ENCODE measurements at regions of chr11 and their contacts with region 1.

Region 1: GRCh38 chr11:1572197-1573076 is at the start of gene DUSP8:
- DNase-seq: peak; percentile 95
- H3K4me3 Mint-ChIP-seq: peak within 1 kb of the TSS; percentile 77
- H3K27ac Mint-ChIP-seq: no peak within 1 kb of the TSS
- H3K4me1 Mint-ChIP-seq: peaks cover 7% of the 10 kb centered on the region
- H3K27me3 Mint-ChIP-seq: no peaks in the 10 kb centered on the region
- CTCF ChIP-seq: no peak
- total RNA-seq, gene DUSP8: 12.1 and 14.0 TPM in 2 replicates

Region 2: GRCh38 chr11:1546536-1547400 is 25.7 kb before region 1 on chr11:
- CTCF ChIA-PET with region 1: interaction called, 92 read pairs
- intact Hi-C with region 1: loop called (anchors 2 kb)
- DNase-seq: peak; percentile 74
- H3K4me3 Mint-ChIP-seq: peak overlapping the region; percentile 62
- H3K27ac Mint-ChIP-seq: no peak overlapping the region
- H3K4me1 Mint-ChIP-seq: no peaks in the 10 kb centered on the region
- H3K27me3 Mint-ChIP-seq: peaks cover 42% of the 10 kb centered on the region
- CTCF ChIP-seq: peak; percentile 94

Region 3: DNA sequence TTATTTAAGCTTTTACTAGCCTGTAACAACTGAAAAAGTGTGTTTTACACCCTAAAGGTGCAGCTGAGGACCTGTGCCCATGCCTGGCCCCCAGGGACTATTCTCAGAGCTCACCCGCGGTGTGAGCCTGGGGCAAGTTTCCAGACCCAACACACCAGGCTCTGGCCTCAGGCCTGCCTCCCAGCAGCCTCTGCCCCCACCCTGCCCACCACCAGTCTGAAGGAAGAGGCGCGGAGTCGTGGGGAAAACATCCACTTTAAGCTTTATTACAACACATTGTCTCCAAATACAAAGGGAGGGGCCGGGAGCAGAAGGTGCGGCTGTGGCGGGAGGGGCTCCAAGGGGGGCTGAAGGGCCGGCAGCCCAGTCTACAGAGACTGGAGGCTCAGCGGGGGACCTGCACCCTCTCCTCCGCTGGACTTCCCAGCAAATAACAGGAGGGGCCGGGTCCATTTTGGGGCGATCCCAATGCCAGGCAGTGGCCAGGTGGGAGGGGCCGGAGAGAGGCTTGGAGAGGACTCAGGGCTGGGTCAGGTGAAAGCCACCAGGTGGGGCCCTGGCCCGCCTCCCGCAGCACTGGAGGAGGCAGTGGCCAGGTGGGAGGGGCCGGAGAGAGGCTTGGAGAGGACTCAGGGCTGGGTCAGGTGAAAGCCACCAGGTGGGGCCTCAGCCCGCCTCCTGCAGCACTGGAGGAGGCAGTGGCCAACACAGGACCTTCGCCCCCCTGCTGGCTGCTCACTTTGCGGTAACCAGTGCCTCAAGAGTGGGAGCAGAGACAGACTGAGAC is 18.4 kb before region 1 on chr11:
- CTCF ChIA-PET with region 1: interaction called, 44 read pairs
- intact Hi-C with region 1: loop called (anchors 2 kb)
- DNase-seq: peak; percentile 83
- H3K4me3 Mint-ChIP-seq: peak overlapping the region; percentile 42
- H3K27ac Mint-ChIP-seq: peak overlapping the region; percentile 20
- H3K4me1 Mint-ChIP-seq: peaks cover 22% of the 10 kb centered on the region
- H3K27me3 Mint-ChIP-seq: peaks cover 26% of the 10 kb centered on the region
- CTCF ChIP-seq: peak; percentile 57

Region 4: DNA sequence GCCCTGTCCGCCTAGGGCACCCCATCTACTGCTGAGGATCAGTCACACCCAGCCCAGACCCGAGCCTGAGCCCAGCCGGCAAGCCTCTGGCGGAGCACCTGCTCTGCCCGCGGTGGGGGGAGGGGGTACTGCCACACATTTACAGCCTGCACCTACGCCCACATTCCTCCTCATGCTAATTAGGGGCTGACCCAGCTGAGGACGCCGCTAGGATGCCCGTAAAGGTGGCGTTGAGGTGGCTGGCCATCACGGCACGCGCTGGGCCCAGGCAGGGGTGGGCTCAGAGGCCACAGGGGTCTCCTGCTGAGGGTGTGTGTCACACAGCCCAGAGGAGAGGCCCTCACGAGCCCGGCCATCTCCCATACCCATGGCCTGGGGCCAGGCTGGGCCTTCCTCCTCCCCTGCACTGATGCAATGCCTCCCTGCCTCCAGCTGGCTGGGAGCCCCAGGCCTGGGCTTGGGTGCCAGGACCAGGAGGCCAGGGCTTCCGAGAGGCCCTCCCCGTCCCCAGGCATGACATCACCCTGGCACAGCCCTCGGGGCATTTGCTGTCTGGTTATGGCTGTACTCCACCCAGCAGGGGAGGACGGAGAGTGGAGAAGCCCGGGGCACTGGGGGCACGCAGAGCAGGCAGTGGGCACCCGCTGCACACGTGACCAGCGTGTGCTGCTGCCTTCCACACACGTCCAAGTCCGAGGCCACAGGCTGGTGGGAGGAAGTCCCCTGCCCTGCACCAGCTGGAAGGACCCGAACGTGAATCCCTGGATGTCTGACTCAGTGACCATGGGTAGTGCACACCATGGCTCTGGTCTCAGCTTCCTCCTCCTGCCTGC is 13.1 kb before region 1 on chr11:
- CTCF ChIA-PET with region 1: interaction called, 44 read pairs
- intact Hi-C with region 1: loop called (anchors 2 kb)
- DNase-seq: peak; percentile 95
- H3K4me3 Mint-ChIP-seq: peak overlapping the region; percentile 60
- H3K27ac Mint-ChIP-seq: peak overlapping the region; percentile 75
- H3K4me1 Mint-ChIP-seq: peaks cover 23% of the 10 kb centered on the region
- H3K27me3 Mint-ChIP-seq: no peaks in the 10 kb centered on the region
- CTCF ChIP-seq: no peak

Region 5: DNA sequence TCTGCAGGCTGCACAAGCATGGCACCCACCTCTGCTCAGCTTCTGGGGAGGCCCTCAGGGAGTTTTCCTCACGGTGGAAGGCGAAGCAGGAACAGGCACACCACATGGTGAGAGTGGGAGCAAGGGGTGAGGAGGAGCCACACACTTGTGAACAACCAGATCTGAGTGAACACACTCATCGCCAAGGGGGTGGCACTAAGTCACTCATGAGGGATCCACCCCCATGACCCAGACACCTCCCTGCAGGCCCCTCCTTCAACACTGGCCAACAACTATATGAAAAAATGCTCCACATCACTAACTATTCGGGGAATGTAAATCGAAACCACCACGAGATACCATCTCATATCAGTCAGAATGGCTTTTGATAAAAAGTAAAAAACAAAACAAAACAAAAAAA is 26.4 kb after region 1 on chr11:
- CTCF ChIA-PET with region 1: interaction called, 15 read pairs
- intact Hi-C with region 1: no loop called
- DNase-seq: no peak
- H3K4me3 Mint-ChIP-seq: no peak overlapping the region
- H3K27ac Mint-ChIP-seq: no peak overlapping the region
- H3K4me1 Mint-ChIP-seq: no peaks in the 10 kb centered on the region
- H3K27me3 Mint-ChIP-seq: peaks cover 100% of the 10 kb centered on the region
- CTCF ChIP-seq: no peak

Region 6: DNA sequence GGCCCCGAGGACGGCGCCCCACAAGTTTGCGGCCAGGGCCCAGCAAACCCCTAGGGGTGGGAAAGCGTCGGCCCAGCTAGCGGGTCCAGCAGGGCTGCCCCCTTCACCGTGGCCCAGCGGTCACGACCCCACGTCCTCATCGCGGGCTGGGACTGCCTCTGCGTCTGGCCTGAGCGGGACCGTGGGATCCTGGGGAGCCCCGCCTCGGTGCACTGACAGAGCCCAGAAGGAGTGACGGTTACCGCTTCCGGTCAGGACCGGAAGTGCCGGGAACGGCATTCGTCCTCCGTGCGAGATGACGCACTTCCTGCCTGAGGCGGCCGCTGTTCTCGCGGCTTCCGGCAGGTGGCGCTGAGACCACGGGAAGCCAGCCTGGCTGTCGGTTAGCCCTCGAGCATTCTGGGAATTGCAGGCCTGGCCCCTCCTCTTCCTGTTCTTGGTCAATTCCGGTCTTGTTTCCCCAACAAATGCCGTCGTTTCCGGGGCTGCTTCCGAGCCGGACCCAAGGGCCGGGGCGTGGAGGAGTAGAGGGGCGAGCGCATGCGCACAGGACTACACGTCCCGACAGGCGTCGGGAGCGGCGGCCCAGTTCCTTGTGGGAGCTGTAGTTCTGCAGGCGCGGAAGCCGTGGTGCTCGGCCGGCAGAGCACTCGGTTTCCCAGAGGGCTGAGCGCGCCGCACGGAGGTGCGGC is 827.8 kb after region 1 on chr11 and contains the start of gene TSSC4:
- CTCF ChIA-PET with region 1: no interaction called
- intact Hi-C with region 1: no loop called
- DNase-seq: peak; percentile 98
- H3K4me3 Mint-ChIP-seq: peak within 1 kb of the TSS; percentile 98
- H3K27ac Mint-ChIP-seq: peak within 1 kb of the TSS; percentile 91
- H3K4me1 Mint-ChIP-seq: no peaks in the 10 kb centered on the region
- H3K27me3 Mint-ChIP-seq: no peaks in the 10 kb centered on the region
- CTCF ChIP-seq: peak; percentile 92
- total RNA-seq, gene TSSC4: 49.4 and 51.9 TPM in 2 replicates

Measured in Calu3 (cell line).